ENCODE measurements at regions of chr5 and their contacts with region 1.

Region 1: DNA sequence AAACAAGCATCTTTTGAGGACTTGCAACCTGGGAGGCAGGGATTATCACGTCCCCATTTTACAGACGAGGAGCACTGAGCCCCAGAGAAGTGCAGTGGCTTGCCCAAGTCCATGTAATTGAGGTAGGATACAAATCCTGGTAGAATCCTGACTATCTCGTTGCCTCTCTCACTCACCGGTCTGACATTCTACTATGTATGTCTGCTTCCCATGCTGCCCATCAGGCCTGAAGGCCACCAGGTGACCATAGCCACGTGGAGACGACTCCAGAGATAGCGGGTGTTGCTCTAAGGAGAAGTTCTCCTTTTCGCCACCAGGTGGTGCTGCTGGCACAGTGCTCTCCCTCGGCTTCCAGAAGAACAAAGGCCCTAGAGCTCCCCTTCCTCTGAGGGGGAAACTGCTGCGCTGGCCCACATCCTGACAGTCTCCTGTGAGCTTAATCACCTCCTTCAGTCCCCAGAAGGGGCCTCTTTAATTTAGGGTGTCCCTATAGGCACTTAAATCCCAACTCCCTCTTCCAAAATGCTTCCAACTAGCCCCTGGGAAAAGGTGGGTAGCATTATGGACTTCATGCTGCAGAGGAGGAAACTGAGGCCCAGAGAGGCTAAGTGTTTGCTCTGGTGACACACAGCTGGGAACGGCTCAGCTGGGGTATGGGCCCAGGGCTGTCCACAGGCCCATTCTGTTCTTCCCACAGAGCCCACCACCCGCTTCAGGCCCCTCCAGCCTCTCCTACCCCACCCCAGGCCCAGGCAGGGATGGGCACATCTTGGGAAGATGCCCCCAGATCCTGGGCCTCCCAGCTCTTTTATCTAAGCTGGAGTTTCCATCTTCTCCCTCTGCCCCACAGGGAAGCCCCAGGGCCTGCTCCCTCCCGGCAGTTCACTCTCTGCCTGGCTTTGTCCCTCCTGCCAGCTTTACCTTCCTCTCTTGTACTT is 6.4 kb downstream of the SLC34A1 start:
- DNase-seq: peak; percentile 96
- ATAC-seq: peak; percentile 81
- H3K4me3 Mint-ChIP-seq: peak overlapping the region; percentile 13
- H3K27ac Mint-ChIP-seq: peak overlapping the region; percentile 76
- H3K4me1 Mint-ChIP-seq: peaks cover 36% of the 10 kb centered on the region
- H3K27me3 Mint-ChIP-seq: no peaks in the 10 kb centered on the region
- CTCF ChIP-seq: peak; percentile 93

Region 2: GRCh38 chr5:176948458-176948857 is 442.2 kb before region 1 on chr5:
- CTCF ChIA-PET with region 1: no interaction called
- POLR2A ChIA-PET with region 1: no interaction called
- intact Hi-C with region 1: no loop called
- DNase-seq: no peak
- ATAC-seq: no peak
- H3K4me3 Mint-ChIP-seq: no peak overlapping the region
- H3K27ac Mint-ChIP-seq: no peak overlapping the region
- H3K4me1 Mint-ChIP-seq: peaks cover 6% of the 10 kb centered on the region
- H3K27me3 Mint-ChIP-seq: no peaks in the 10 kb centered on the region
- CTCF ChIP-seq: no peak

Region 3: GRCh38 chr5:177317959-177318377 is 72.7 kb before region 1 on chr5:
- CTCF ChIA-PET with region 1: interaction called, 24 read pairs
- POLR2A ChIA-PET with region 1: interaction called, 6 read pairs
- intact Hi-C with region 1: loop called (anchors 10 kb)
- DNase-seq: peak; percentile 90
- ATAC-seq: peak; percentile 76
- H3K4me3 Mint-ChIP-seq: no peak overlapping the region
- H3K27ac Mint-ChIP-seq: no peak overlapping the region
- H3K4me1 Mint-ChIP-seq: peaks cover 20% of the 10 kb centered on the region
- H3K27me3 Mint-ChIP-seq: no peaks in the 10 kb centered on the region
- CTCF ChIP-seq: peak; percentile 94

Region 4: GRCh38 chr5:177357459-177358351 is 32.9 kb before region 1 on chr5 and contains the start of gene RGS14:
- CTCF ChIA-PET with region 1: interaction called, 24 read pairs
- POLR2A ChIA-PET with region 1: interaction called, 3 read pairs
- intact Hi-C with region 1: no loop called
- DNase-seq: peak; percentile 75
- ATAC-seq: peak; percentile 87
- H3K4me3 Mint-ChIP-seq: peak within 1 kb of the TSS; percentile 89
- H3K27ac Mint-ChIP-seq: peak within 1 kb of the TSS; percentile 84
- H3K4me1 Mint-ChIP-seq: peaks cover 75% of the 10 kb centered on the region
- H3K27me3 Mint-ChIP-seq: no peaks in the 10 kb centered on the region
- CTCF ChIP-seq: no peak
- total RNA-seq, gene RGS14: 50.4 to 52.5 TPM

Region 5: DNA sequence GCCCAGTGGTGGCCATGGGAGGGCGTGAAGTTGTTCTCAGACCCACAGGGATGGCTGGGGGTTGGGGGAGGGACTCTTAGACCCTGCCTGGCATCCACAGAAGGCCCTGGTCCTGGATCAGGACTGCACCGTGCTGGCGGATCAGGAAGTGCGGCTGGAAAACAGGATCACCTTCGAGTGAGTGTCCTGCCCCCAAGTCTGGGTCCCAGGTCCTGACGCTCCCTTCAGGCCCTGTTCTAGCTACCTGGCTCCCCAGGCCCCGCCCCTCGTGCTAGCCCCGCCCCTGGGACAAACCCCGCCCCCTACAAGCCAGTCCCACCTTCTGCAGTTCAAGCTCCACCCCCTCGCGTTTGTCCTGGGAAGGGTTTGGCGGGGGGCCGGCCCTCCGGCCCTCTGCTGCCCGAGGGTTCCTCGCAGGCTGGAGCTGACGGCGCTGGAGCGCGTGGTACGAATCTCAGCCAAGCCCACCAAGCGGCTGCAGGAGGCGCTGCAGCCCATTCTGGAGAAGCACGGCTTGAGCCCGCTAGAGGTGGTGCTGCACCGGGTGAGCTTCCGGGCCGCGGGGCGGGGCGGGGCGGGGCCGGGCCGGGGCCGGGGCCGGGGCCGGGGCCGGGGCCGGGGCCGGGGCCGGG is 20.0 kb before region 1 on chr5:
- CTCF ChIA-PET with region 1: interaction called, 86 read pairs
- POLR2A ChIA-PET with region 1: interaction called, 5 read pairs
- intact Hi-C with region 1: no loop called
- DNase-seq: peak; percentile 63
- ATAC-seq: peak; percentile 65
- H3K4me3 Mint-ChIP-seq: no peak overlapping the region
- H3K27ac Mint-ChIP-seq: no peak overlapping the region
- H3K4me1 Mint-ChIP-seq: peaks cover 58% of the 10 kb centered on the region
- H3K27me3 Mint-ChIP-seq: no peaks in the 10 kb centered on the region
- CTCF ChIP-seq: no peak

Region 6: DNA sequence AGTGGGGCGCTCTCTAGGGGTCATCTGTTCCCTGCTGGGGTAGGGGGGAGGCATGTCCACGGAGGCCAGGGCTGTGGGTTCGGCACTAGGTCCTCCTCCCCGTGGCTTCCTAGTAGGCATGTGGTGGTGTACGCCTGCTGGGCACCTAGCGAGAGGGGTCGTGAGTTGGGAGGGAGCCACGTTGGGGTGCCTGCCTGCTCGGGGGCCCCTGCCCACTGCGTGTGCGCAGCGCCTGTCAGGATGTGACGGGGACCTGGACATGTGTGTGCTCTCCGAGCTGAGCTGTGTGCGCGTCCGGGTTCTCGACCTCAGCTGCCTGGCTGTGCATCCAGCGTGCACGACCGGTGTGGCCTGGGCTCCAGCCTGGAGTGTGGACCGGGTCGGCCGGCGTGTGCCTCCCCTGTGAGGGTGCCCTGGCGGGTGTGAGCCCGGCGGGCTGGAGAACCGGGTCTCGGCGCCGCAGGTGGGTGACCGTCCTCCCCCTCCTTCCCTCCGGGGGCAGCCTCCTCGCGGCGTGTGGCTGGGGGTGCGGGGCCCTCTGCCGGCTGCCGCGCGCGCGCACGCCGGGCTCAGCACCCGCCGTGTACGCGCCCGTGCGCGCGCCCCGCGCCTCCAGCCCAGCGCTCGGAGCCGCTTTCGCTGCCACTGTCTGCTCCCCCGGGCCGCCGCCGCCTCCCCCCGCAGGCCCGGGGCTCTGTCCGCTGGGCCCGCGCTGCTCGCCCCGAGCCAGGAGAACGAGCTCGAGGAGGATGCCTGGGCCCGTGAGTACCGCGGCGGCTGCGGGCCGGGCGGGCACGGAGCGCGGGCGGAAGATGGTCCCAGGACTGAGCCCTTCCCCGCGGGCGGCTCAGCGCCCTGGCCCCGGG is 55.8 kb after region 1 on chr5 and contains the start of gene PRR7:
- CTCF ChIA-PET with region 1: interaction called, 237 read pairs
- POLR2A ChIA-PET with region 1: interaction called, 17 read pairs
- intact Hi-C with region 1: no loop called
- DNase-seq: peak; percentile 77
- ATAC-seq: peak; percentile 58
- H3K4me3 Mint-ChIP-seq: peak within 1 kb of the TSS; percentile 79
- H3K27ac Mint-ChIP-seq: peak within 1 kb of the TSS; percentile 80
- H3K4me1 Mint-ChIP-seq: peaks cover 43% of the 10 kb centered on the region
- H3K27me3 Mint-ChIP-seq: no peaks in the 10 kb centered on the region
- CTCF ChIP-seq: no peak
- total RNA-seq, gene PRR7: 32.6 to 36.4 TPM

Region 7: DNA sequence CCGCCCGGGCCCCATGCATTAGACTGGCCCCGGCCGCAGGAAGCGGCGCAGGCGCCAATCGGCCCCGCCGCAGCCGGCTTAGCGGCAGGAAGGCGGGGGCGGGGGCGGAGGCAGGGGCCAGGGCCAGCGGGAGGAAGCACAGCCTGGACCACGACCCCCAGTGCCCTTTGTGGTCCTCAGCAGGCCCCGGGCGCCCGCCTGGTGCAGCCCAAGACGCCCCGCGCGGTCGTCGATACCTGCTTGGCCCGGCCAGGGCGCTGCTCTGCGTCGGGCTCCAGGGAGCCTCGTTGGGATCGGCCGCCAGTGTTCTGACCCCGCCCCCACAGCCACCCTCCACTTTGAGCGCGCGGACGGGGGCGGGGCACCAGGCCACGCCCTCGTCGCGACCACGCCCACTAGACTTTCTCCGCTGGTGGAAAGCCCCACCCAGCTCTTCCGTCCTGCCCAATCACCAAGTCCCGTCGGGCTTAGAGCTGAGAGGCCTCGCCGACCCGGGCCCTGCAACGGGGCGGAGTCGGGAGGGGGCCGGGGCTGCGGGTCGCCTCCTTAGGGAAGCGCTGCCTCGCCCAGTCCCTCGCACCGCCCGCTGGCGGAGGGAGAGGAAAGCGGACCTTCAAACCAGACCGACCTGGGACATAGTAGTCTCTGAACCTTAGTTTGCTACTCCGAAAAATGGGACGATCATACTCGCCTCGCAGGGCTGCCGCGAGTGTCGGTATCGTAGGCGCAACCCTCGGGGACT is 106.8 kb after region 1 on chr5 and contains the start of gene PDLIM7:
- CTCF ChIA-PET with region 1: interaction called, 59 read pairs
- POLR2A ChIA-PET with region 1: interaction called, 7 read pairs
- intact Hi-C with region 1: loop called (anchors 2 kb)
- DNase-seq: peak; percentile 97
- ATAC-seq: peak; percentile 82
- H3K4me3 Mint-ChIP-seq: peak within 1 kb of the TSS; percentile 79
- H3K27ac Mint-ChIP-seq: peak within 1 kb of the TSS; percentile 68
- H3K4me1 Mint-ChIP-seq: peaks cover 38% of the 10 kb centered on the region
- H3K27me3 Mint-ChIP-seq: peaks cover 11% of the 10 kb centered on the region
- CTCF ChIP-seq: no peak
- total RNA-seq, gene PDLIM7: 68.4 to 73.0 TPM

Region 8: GRCh38 chr5:177592010-177592834 is 201.6 kb after region 1 on chr5 and contains the start of gene TMED9:
- CTCF ChIA-PET with region 1: no interaction called
- POLR2A ChIA-PET with region 1: no interaction called
- intact Hi-C with region 1: no loop called
- DNase-seq: peak; percentile 89
- ATAC-seq: peak; percentile 97
- H3K4me3 Mint-ChIP-seq: peak within 1 kb of the TSS; percentile 92
- H3K27ac Mint-ChIP-seq: peak within 1 kb of the TSS; percentile 100
- H3K4me1 Mint-ChIP-seq: peaks cover 24% of the 10 kb centered on the region
- H3K27me3 Mint-ChIP-seq: peaks cover 12% of the 10 kb centered on the region
- CTCF ChIP-seq: no peak
- total RNA-seq, gene TMED9: 118 to 120 TPM